Activated B cell treated with CpG ODN at 0.5 μM for 24 hours (primary cell): ENCODE measurements at regions of chrX and their contacts with region 1.

Region 1: DNA sequence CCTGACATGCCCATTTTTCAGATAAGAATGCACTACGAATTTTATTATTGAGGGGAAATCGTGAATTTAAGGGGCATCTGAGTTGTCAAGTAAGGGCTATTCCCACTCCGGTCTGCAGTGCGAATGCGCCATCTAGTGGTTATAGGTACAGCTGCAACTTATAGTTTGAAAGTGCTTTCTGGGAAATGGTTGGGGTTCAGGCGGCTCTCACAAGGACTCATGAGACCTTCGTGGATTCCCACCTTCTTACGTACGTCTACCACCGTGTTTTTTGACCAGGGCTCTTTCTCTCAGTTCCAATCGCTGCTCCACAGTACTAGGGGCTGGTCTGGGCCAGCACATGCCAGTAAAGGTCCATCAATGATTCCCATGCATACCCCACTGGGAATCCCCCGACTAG is 12.3 kb downstream of the MSL3 start:
- DNase-seq: no peak
- ATAC-seq: peak; percentile 65
- H3K4me3 Mint-ChIP-seq: no peak overlapping the region
- H3K27ac Mint-ChIP-seq: peak overlapping the region; percentile 63
- H3K4me1 Mint-ChIP-seq: peaks cover 23% of the 10 kb centered on the region
- H3K27me3 Mint-ChIP-seq: no peaks in the 10 kb centered on the region
- CTCF ChIP-seq: no peak

Region 2: DNA sequence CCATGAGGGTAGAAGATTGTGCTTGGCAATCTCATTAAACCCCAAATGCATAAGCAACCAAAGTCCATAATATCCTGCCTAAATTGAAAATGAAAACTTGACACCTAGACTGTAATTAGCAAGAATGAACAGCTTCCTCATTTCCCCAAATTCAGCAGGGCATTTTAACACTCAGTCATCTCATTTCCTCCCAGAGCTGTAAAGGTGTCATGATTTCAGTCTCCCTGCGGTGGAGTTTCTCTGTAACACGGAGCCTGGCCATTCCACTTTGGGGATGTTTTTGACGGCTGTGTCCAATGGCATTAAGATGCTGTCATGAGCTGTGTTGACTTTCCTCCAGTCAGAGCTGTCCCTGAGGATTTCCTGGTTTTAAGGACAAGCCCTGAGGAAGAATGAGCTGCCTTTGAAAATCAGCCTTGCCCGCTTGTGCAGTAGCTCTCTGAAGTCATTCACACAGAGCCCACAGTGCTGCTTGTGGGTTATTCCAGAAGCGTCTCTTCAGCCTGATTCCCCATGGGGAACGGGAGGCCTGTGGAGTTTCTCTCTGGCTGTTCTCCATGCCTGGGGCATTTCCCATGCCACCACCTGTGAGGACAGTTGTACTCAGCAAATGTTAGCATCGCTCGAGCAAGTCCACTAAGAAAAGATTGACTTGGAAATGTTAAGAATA is 1336.9 kb before region 1 on chrX:
- CTCF ChIA-PET with region 1: no interaction called
- POLR2A ChIA-PET with region 1: no interaction called
- intact Hi-C with region 1: no loop called
- DNase-seq: no peak
- ATAC-seq: no peak
- H3K4me3 Mint-ChIP-seq: no peak overlapping the region
- H3K27ac Mint-ChIP-seq: no peak overlapping the region
- H3K4me1 Mint-ChIP-seq: no peaks in the 10 kb centered on the region
- H3K27me3 Mint-ChIP-seq: peaks cover 2% of the 10 kb centered on the region
- CTCF ChIP-seq: no peak

Region 3: GRCh38 chrX:11381464-11381863 is 388.9 kb before region 1 on chrX:
- CTCF ChIA-PET with region 1: no interaction called
- POLR2A ChIA-PET with region 1: no interaction called
- intact Hi-C with region 1: loop called (anchors 5 kb)
- DNase-seq: no peak
- ATAC-seq: peak; percentile 67
- H3K4me3 Mint-ChIP-seq: no peak overlapping the region
- H3K27ac Mint-ChIP-seq: no peak overlapping the region
- H3K4me1 Mint-ChIP-seq: peaks cover 9% of the 10 kb centered on the region
- H3K27me3 Mint-ChIP-seq: no peaks in the 10 kb centered on the region
- CTCF ChIP-seq: peak; percentile 20

Region 4: DNA sequence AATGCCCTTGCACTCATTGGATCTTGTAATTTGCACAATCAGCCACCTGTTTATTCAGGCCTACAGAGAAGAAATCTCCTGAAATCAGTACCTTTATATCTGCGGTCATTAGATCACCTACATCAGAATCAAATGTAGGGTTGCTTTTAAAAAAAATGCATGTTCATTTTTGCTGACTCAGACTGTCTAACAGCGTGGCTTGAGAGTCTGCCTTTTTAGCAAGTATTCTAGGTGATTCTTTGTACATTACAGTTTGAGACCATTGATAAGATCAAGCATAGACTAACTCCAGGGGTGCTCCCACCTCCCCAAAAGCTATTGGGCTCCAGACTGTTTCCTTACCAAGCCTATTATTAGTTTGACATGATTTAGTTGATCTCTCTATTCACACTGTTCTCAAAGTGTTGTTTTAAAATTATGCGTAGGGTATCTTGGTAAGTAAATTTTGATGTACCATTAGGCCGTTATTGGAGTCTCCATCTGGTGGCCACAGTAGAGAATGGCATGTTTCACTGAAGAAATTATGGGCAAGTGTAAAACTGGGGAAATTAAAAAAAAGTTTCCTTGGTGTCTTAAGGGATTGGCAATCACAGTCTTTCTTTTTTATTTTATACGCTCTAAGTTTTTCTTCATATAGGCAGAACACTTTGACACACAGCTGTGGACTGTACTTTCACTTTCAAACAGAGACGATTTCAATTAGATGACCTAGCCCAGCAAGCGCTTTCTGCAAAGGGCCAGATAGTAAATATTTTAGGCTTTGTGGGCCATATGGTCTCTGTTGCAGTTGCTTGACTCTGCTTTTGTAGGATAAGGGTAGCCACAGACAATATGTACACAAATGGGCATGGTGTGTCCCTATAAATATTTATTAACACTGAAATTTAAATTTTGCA is 46.0 kb before region 1 on chrX:
- CTCF ChIA-PET with region 1: interaction called, 4 read pairs
- POLR2A ChIA-PET with region 1: no interaction called
- intact Hi-C with region 1: loop called (anchors 1 kb)
- DNase-seq: no peak
- ATAC-seq: no peak
- H3K4me3 Mint-ChIP-seq: no peak overlapping the region
- H3K27ac Mint-ChIP-seq: no peak overlapping the region
- H3K4me1 Mint-ChIP-seq: no peaks in the 10 kb centered on the region
- H3K27me3 Mint-ChIP-seq: no peaks in the 10 kb centered on the region
- CTCF ChIP-seq: peak; percentile 21

Region 5: GRCh38 chrX:11739776-11740175 is 30.5 kb before region 1 on chrX:
- CTCF ChIA-PET with region 1: no interaction called
- POLR2A ChIA-PET with region 1: no interaction called
- intact Hi-C with region 1: no loop called
- DNase-seq: no peak
- ATAC-seq: no peak
- H3K4me3 Mint-ChIP-seq: no peak overlapping the region
- H3K27ac Mint-ChIP-seq: no peak overlapping the region
- H3K4me1 Mint-ChIP-seq: no peaks in the 10 kb centered on the region
- H3K27me3 Mint-ChIP-seq: peaks cover 4% of the 10 kb centered on the region
- CTCF ChIP-seq: no peak

Region 6: GRCh38 chrX:11787564-11787963 is 17.2 kb after region 1 on chrX:
- CTCF ChIA-PET with region 1: interaction called, 5 read pairs
- POLR2A ChIA-PET with region 1: no interaction called
- intact Hi-C with region 1: loop called (anchors 2 kb)
- DNase-seq: peak; percentile 46
- ATAC-seq: peak; percentile 65
- H3K4me3 Mint-ChIP-seq: peak overlapping the region; percentile 53
- H3K27ac Mint-ChIP-seq: no peak overlapping the region
- H3K4me1 Mint-ChIP-seq: peaks cover 27% of the 10 kb centered on the region
- H3K27me3 Mint-ChIP-seq: no peaks in the 10 kb centered on the region
- CTCF ChIP-seq: no peak

Region 7: DNA sequence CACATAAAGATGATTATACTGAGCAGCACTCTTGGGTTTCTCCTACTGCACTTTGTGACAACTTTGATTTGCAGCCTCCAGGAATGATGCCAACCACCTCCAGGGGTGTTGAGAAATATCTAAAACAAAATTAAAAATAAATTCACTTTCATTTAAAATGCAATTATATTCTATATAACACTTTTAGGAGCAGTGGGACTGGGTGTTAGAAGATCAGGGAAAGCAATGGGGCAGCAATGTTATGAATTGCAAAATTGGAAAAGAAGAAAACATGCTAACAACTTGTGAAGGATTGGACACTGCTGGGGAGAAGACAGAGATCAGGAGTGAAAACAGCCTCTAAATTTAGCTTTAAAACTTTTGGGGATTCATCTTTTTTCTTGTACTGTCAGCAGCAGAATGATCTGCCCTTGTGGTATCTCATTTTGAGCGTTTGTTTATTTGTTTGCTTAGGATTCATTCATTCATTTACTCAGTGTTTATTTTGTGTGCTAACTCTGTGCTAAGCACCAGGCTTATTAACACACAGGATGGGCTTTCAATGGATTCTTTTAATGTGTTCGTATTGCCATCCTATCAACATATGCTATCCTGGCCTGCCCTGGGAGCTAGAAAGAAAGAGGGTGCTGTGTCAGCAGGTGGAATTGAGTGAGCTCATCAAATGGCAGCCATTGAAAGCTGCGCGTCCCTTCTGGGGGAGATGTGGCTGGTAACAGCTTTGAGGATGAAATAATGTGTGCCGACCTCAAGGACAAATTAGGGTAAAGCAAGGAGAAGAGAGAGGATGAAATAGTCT is 464.4 kb after region 1 on chrX:
- CTCF ChIA-PET with region 1: no interaction called
- POLR2A ChIA-PET with region 1: no interaction called
- intact Hi-C with region 1: no loop called
- DNase-seq: no peak
- ATAC-seq: no peak
- H3K4me3 Mint-ChIP-seq: no peak overlapping the region
- H3K27ac Mint-ChIP-seq: no peak overlapping the region
- H3K4me1 Mint-ChIP-seq: no peaks in the 10 kb centered on the region
- H3K27me3 Mint-ChIP-seq: no peaks in the 10 kb centered on the region
- CTCF ChIP-seq: no peak

Region 8: DNA sequence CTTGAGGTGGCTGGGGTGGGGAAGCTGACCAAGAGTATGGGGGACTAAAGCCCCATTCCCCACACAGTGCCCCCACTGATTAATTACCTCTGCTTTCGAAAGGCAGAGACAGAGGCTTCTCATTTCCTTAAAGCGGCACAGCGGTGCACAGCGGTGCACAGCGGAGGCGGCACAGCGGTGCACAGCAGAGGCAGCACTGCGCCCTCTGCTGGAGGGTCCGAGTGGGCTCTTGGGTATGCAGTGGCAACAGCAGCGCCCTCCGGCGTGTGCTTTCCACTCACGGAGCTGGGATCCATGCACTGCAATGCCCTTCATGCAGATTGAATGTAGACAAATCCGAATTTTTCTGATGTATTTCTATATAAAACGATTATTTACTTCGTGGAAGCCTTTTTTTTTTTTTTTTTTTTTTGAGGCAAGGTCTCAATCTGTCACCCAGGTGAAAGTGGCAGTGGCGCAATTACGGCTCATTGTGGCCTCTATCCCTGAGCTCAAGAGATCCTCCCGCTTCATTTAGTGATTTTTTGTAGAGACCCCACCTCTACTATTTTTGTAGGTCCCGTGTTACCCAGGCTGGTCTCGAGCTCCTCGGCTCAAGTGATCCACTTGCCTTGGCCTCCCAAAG is 1001.2 kb after region 1 on chrX:
- CTCF ChIA-PET with region 1: no interaction called
- POLR2A ChIA-PET with region 1: no interaction called
- intact Hi-C with region 1: loop called (anchors 10 kb)
- DNase-seq: peak; percentile 53
- ATAC-seq: peak; percentile 100
- H3K4me3 Mint-ChIP-seq: no peak overlapping the region
- H3K27ac Mint-ChIP-seq: no peak overlapping the region
- H3K4me1 Mint-ChIP-seq: peaks cover 9% of the 10 kb centered on the region
- H3K27me3 Mint-ChIP-seq: no peaks in the 10 kb centered on the region
- CTCF ChIP-seq: no peak